ENCODE measurements at regions of chr12 and their contacts with region 1.

Region 1: GRCh38 chr12:6688999-6689882 is at the start of gene ZNF384:
- DNase-seq: peak; percentile 89 to 99 (median 96)
- ATAC-seq: peak; percentile 78
- H3K4me3 ChIP-seq: peak within 1 kb of the TSS; percentile 60 to 77
- H3K4me3 Mint-ChIP-seq: peak within 1 kb of the TSS; percentile 94
- H3K27ac ChIP-seq: peak within 1 kb of the TSS; percentile 89 to 91
- H3K27ac Mint-ChIP-seq: peak within 1 kb of the TSS; percentile 98
- H3K4me1 ChIP-seq: peaks cover 33% of the 10 kb centered on the region
- H3K4me1 Mint-ChIP-seq: peaks cover 55% of the 10 kb centered on the region
- H3K27me3 ChIP-seq: no peaks in the 10 kb centered on the region
- H3K27me3 Mint-ChIP-seq: no peaks in the 10 kb centered on the region
- CTCF ChIP-seq: no peak
- total RNA-seq, gene ZNF384: 61.8 to 63.8 TPM

Region 2: GRCh38 chr12:6563448-6564050 is 125.7 kb before region 1 on chr12:
- CTCF ChIA-PET with region 1: interaction called, 3 read pairs
- POLR2A ChIA-PET with region 1: interaction called, 6 read pairs
- intact Hi-C with region 1: loop called (anchors 1 kb)
- DNase-seq: peak; percentile 39 to 82 (median 73)
- ATAC-seq: peak; percentile 27
- H3K4me3 ChIP-seq: no peak overlapping the region
- H3K4me3 Mint-ChIP-seq: no peak overlapping the region
- H3K27ac ChIP-seq: no peak overlapping the region
- H3K27ac Mint-ChIP-seq: peak overlapping the region; percentile 78
- H3K4me1 ChIP-seq: peaks cover 18% of the 10 kb centered on the region
- H3K4me1 Mint-ChIP-seq: peaks cover 42% of the 10 kb centered on the region
- H3K27me3 ChIP-seq: no peaks in the 10 kb centered on the region
- H3K27me3 Mint-ChIP-seq: no peaks in the 10 kb centered on the region
- CTCF ChIP-seq: peak; percentile 71

Region 3: DNA sequence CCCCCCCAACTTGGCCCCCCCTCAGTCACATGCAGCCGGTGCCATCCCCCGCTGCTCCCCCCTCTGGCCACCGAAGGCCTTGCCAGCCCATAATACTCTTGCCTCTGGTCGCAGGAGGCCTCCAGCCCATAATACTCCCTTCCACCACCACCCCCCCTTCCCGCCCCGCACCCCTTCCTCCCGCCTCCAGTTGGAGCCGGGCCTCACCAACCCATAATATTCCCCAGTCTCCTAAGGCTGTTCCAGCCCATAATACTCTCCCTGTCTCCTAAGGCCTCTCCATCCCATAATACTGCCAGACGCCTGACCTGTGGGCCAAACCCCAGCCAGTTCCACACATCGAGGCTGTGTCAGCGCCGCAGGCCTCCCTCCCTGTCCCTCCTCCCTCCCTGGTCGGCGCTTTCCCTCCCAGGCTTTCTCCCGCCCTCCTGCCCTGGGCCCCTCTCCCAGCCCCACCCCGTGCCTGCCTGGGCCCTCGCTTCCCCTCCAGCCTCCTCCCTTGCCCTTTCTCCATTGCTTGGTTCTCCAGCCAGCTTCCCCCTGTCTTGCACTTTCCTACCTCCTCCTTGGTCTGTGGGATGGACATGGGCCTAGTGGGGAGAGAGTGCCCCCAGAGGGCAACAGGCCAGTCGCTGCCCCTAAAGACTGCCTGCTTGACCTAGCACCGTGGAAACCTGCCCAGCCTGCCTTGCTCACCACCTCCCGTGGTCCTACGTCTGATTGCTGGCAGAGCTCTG is 75.3 kb before region 1 on chr12:
- CTCF ChIA-PET with region 1: interaction called, 10 read pairs
- POLR2A ChIA-PET with region 1: interaction called, 8 read pairs
- intact Hi-C with region 1: loop called (anchors 2 kb)
- DNase-seq: peak in 7 of 9 experiments; percentile 36 to 90 (median 67)
- ATAC-seq: peak; percentile 43
- H3K4me3 ChIP-seq: no peak overlapping the region
- H3K4me3 Mint-ChIP-seq: no peak overlapping the region
- H3K27ac ChIP-seq: peak overlapping the region in 1 of 2 experiments; percentile 77
- H3K27ac Mint-ChIP-seq: peak overlapping the region; percentile 90
- H3K4me1 ChIP-seq: peaks cover 37% of the 10 kb centered on the region
- H3K4me1 Mint-ChIP-seq: peaks cover 55% of the 10 kb centered on the region
- H3K27me3 ChIP-seq: no peaks in the 10 kb centered on the region
- H3K27me3 Mint-ChIP-seq: no peaks in the 10 kb centered on the region
- CTCF ChIP-seq: no peak

Region 4: GRCh38 chr12:6662906-6663742 is 26.1 kb before region 1 on chr12 and contains the start of gene ING4:
- CTCF ChIA-PET with region 1: interaction called, 6 read pairs
- POLR2A ChIA-PET with region 1: interaction called, 19 read pairs
- intact Hi-C with region 1: loop called (anchors 1 kb)
- DNase-seq: peak; percentile 91 to 100 (median 95)
- ATAC-seq: peak; percentile 97
- H3K4me3 ChIP-seq: peak within 1 kb of the TSS; percentile 81 to 92
- H3K4me3 Mint-ChIP-seq: peak within 1 kb of the TSS; percentile 96
- H3K27ac ChIP-seq: peak within 1 kb of the TSS; percentile 87 to 91
- H3K27ac Mint-ChIP-seq: peak within 1 kb of the TSS; percentile 97
- H3K4me1 ChIP-seq: peaks cover 20% of the 10 kb centered on the region
- H3K4me1 Mint-ChIP-seq: peaks cover 38% of the 10 kb centered on the region
- H3K27me3 ChIP-seq: no peaks in the 10 kb centered on the region
- H3K27me3 Mint-ChIP-seq: no peaks in the 10 kb centered on the region
- CTCF ChIP-seq: no peak
- total RNA-seq, gene ING4: 14.1 to 15.9 TPM

Region 5: GRCh38 chr12:6745741-6746525 is 56.7 kb after region 1 on chr12:
- CTCF ChIA-PET with region 1: no interaction called
- POLR2A ChIA-PET with region 1: no interaction called
- intact Hi-C with region 1: no loop called
- DNase-seq: peak in 2 of 9 experiments; percentile 42 to 53
- ATAC-seq: peak; percentile 96
- H3K4me3 ChIP-seq: no peak overlapping the region
- H3K4me3 Mint-ChIP-seq: no peak overlapping the region
- H3K27ac ChIP-seq: no peak overlapping the region
- H3K27ac Mint-ChIP-seq: peak overlapping the region; percentile 86
- H3K4me1 ChIP-seq: peaks cover 15% of the 10 kb centered on the region
- H3K4me1 Mint-ChIP-seq: peaks cover 14% of the 10 kb centered on the region
- H3K27me3 ChIP-seq: no peaks in the 10 kb centered on the region
- H3K27me3 Mint-ChIP-seq: no peaks in the 10 kb centered on the region
- CTCF ChIP-seq: no peak

Region 6: DNA sequence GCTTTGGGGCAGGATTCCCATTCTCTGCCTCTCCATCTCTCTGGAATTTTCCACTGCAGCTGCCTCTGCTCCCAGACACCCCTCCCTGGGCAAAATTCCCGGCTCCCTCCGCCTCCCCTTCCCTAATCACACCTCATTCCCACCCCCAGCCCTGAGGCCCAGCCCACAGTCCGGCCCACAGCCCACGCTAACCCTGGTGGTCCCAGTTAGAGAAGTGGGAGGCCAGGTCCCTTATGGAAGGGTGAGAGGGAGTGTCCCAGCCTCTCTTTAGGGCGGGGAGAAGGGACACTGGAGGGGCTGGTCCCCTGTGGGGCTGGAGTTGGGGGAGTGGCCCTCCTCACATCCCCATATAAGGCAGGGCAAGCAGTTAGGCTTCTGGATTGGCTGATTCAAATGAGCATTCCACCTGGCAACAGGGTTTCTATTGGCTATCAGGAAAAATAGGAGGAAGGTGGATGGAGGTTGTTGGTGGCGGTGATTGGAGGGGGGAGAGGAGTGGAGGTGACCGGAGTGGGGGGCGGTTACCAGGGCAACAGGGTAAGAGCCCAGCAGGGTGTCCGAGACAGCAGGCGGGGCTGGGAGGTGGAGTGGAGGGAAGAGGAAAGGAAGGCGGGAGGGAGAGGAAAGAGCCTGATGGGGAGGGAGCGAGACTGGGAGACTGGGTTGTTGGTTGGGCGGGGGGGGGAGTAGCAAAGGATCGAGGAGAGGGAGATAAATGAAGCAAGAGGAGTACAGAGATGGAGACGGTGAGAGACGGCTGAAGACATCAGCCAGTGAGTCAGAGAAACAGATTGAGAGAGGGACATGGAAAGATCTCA is 75.0 kb after region 1 on chr12:
- CTCF ChIA-PET with region 1: interaction called, 4 read pairs
- POLR2A ChIA-PET with region 1: interaction called, 3 read pairs
- intact Hi-C with region 1: loop called in 1 of 2 experiments (anchors 2 kb)
- DNase-seq: peak in 6 of 9 experiments; percentile 17 to 86 (median 54)
- ATAC-seq: peak; percentile 84
- H3K4me3 ChIP-seq: no peak overlapping the region
- H3K4me3 Mint-ChIP-seq: peak overlapping the region; percentile 13
- H3K27ac ChIP-seq: no peak overlapping the region
- H3K27ac Mint-ChIP-seq: no peak overlapping the region
- H3K4me1 ChIP-seq: peaks cover 22% of the 10 kb centered on the region
- H3K4me1 Mint-ChIP-seq: peaks cover 31% of the 10 kb centered on the region
- H3K27me3 ChIP-seq: peaks cover 7 to 13% of the 10 kb centered on the region in 2 experiments
- H3K27me3 Mint-ChIP-seq: peaks cover 38% of the 10 kb centered on the region
- CTCF ChIP-seq: no peak

Region 7: GRCh38 chr12:6944381-6945186 is 255.3 kb after region 1 on chr12:
- CTCF ChIA-PET with region 1: no interaction called
- POLR2A ChIA-PET with region 1: interaction called, 13 read pairs
- intact Hi-C with region 1: no loop called
- DNase-seq: peak; percentile 67 to 94 (median 89)
- ATAC-seq: peak; percentile 51
- H3K4me3 ChIP-seq: peak overlapping the region; percentile 90 to 97
- H3K4me3 Mint-ChIP-seq: peak overlapping the region; percentile 99
- H3K27ac ChIP-seq: peak overlapping the region; percentile 94 to 97
- H3K27ac Mint-ChIP-seq: peak overlapping the region; percentile 100
- H3K4me1 ChIP-seq: peaks cover 56% of the 10 kb centered on the region
- H3K4me1 Mint-ChIP-seq: peaks cover 63% of the 10 kb centered on the region
- H3K27me3 ChIP-seq: no peaks in the 10 kb centered on the region
- H3K27me3 Mint-ChIP-seq: no peaks in the 10 kb centered on the region
- CTCF ChIP-seq: peak; percentile 87

Measured in CD8-positive, alpha-beta T cell (primary cell).